B cell (primary cell): ENCODE measurements at regions of chr1 and their contacts with region 1.

Region 1: DNA sequence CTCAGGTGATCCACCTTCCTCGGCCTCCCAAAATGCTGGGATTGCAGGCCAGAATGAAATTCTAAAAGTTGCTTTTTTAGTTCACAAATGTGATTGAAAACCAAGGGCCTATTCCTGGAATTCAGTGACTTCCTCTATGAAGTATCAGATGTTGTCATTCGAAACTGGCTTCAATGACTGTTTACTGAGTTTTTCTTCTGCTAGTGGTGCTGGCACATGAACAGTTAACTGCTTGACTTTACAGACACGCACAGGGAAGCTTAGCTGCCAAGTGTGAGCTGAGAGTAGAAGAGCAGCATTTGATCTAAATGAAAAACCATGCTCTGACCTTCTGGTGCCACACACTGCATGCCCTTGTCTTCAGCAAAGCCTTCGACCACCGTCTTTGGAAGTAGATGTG is 32.8 kb upstream of the AJAP1 start:
- DNase-seq: no peak
- ATAC-seq: no peak
- H3K4me3 ChIP-seq: no peak overlapping the region
- H3K4me3 Mint-ChIP-seq: no peak overlapping the region
- H3K27ac ChIP-seq: no peak overlapping the region
- H3K27ac Mint-ChIP-seq: no peak overlapping the region
- H3K4me1 ChIP-seq: no peaks in the 10 kb centered on the region
- H3K4me1 Mint-ChIP-seq: no peaks in the 10 kb centered on the region
- H3K27me3 ChIP-seq: no peaks in the 10 kb centered on the region
- H3K27me3 Mint-ChIP-seq: no peaks in the 10 kb centered on the region
- CTCF ChIP-seq: no peak

Region 2: DNA sequence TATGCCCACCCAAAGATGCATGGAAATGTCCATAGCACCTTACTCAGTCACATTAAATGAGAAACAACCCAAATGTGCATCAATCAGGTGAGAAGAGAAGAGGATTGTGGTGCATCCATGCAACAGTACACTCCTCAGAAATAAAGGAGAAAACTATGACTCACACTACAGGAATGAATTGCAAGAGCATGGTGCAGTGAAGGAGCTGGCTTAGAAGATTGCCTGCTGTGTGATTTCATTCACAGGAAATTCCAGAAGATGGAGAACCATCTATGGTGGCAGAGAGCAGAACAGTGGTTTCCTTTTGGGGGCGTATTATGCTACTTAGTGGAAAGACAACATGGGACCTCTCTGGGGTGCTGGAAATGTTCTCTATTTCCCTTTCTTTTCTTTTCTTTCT is 245.8 kb before region 1 on chr1:
- CTCF ChIA-PET with region 1: no interaction called
- POLR2A ChIA-PET with region 1: no interaction called
- intact Hi-C with region 1: no loop called
- DNase-seq: no peak
- ATAC-seq: no peak
- H3K4me3 ChIP-seq: no peak overlapping the region
- H3K4me3 Mint-ChIP-seq: no peak overlapping the region
- H3K27ac ChIP-seq: no peak overlapping the region
- H3K27ac Mint-ChIP-seq: no peak overlapping the region
- H3K4me1 ChIP-seq: no peaks in the 10 kb centered on the region
- H3K4me1 Mint-ChIP-seq: no peaks in the 10 kb centered on the region
- H3K27me3 ChIP-seq: peaks cover 0 to 3% (median 0%) of the 10 kb centered on the region in 4 experiments
- H3K27me3 Mint-ChIP-seq: peaks cover 4% of the 10 kb centered on the region
- CTCF ChIP-seq: no peak

Region 3: GRCh38 chr1:4638345-4638729 is 16.7 kb after region 1 on chr1:
- CTCF ChIA-PET with region 1: no interaction called
- POLR2A ChIA-PET with region 1: no interaction called
- intact Hi-C with region 1: loop called (anchors 1 kb)
- DNase-seq: no peak
- ATAC-seq: no peak
- H3K4me3 ChIP-seq: no peak overlapping the region
- H3K4me3 Mint-ChIP-seq: no peak overlapping the region
- H3K27ac ChIP-seq: no peak overlapping the region
- H3K27ac Mint-ChIP-seq: no peak overlapping the region
- H3K4me1 ChIP-seq: no peaks in the 10 kb centered on the region
- H3K4me1 Mint-ChIP-seq: peaks cover 4% of the 10 kb centered on the region
- H3K27me3 ChIP-seq: no peaks in the 10 kb centered on the region
- H3K27me3 Mint-ChIP-seq: peaks cover 22% of the 10 kb centered on the region
- CTCF ChIP-seq: no peak

Region 4: GRCh38 chr1:4710592-4711415 is 89.2 kb after region 1 on chr1:
- CTCF ChIA-PET with region 1: no interaction called
- POLR2A ChIA-PET with region 1: no interaction called
- intact Hi-C with region 1: no loop called
- DNase-seq: no peak
- ATAC-seq: no peak
- H3K4me3 ChIP-seq: no peak overlapping the region
- H3K4me3 Mint-ChIP-seq: no peak overlapping the region
- H3K27ac ChIP-seq: no peak overlapping the region
- H3K27ac Mint-ChIP-seq: no peak overlapping the region
- H3K4me1 ChIP-seq: no peaks in the 10 kb centered on the region
- H3K4me1 Mint-ChIP-seq: no peaks in the 10 kb centered on the region
- H3K27me3 ChIP-seq: no peaks in the 10 kb centered on the region
- H3K27me3 Mint-ChIP-seq: peaks cover 15% of the 10 kb centered on the region
- CTCF ChIP-seq: no peak

Region 5: DNA sequence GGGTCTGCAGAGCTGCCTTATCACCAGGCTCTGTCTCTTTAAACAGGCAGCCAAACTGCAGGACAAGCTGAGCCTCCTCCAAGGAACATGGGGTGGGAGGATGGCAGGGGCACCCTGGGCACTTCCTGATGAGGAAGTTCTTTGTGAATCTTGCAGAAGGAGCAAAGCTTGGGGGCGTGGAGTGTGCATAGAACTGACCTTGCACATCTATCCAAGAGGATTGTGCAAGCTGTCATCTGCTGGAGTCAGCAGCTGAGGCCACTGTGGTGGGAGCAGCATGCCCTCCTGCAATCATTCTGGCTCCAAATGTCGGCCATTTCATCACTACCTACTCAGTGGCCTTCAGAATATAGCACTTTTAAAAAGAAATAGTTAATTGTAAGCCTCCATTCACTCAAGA is 214.9 kb after region 1 on chr1:
- CTCF ChIA-PET with region 1: no interaction called
- POLR2A ChIA-PET with region 1: no interaction called
- intact Hi-C with region 1: no loop called
- DNase-seq: no peak
- ATAC-seq: no peak
- H3K4me3 ChIP-seq: no peak overlapping the region
- H3K4me3 Mint-ChIP-seq: no peak overlapping the region
- H3K27ac ChIP-seq: no peak overlapping the region
- H3K27ac Mint-ChIP-seq: no peak overlapping the region
- H3K4me1 ChIP-seq: no peaks in the 10 kb centered on the region
- H3K4me1 Mint-ChIP-seq: no peaks in the 10 kb centered on the region
- H3K27me3 ChIP-seq: peaks cover 0 to 2% (median under 1%) of the 10 kb centered on the region in 4 experiments
- H3K27me3 Mint-ChIP-seq: peaks cover 10% of the 10 kb centered on the region
- CTCF ChIP-seq: no peak